ENCODE measurements at regions of chr1 and their contacts with region 1.

Region 1: DNA sequence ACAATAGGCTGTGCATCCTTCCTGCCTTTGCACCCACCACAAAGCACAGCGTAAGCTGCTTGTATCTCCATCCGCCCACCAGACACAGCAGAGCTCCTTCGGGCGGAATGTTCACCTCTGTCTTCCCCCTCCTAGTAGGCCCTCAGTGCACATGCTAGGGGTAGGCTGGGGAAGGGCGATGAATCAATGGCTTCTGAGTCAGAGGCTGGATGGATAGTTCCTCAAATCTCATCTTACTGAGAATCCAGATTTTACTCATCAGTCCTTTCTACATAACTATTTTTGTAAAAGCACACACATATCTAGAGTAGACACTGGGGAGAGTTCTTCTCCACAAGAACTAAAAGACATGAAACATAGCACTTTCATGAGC is 73.8 kb downstream of the BCAR3 start:
- DNase-seq: no peak
- H3K4me3 Mint-ChIP-seq: no peak overlapping the region
- H3K27ac Mint-ChIP-seq: peak overlapping the region; percentile 31
- H3K4me1 Mint-ChIP-seq: peaks cover 43% of the 10 kb centered on the region
- H3K27me3 Mint-ChIP-seq: peaks cover 35% of the 10 kb centered on the region

Region 2: GRCh38 chr1:93459126-93459525 is 148.7 kb before region 1 on chr1:
- intact Hi-C with region 1: loop called (anchors 5 kb)
- DNase-seq: no peak
- H3K4me3 Mint-ChIP-seq: no peak overlapping the region
- H3K27ac Mint-ChIP-seq: no peak overlapping the region
- H3K4me1 Mint-ChIP-seq: peaks cover 2% of the 10 kb centered on the region
- H3K27me3 Mint-ChIP-seq: peaks cover 36% of the 10 kb centered on the region

Region 3: GRCh38 chr1:93567255-93567918 is 40.4 kb before region 1 on chr1:
- intact Hi-C with region 1: loop called (anchors 5 kb)
- DNase-seq: no peak
- H3K4me3 Mint-ChIP-seq: no peak overlapping the region
- H3K27ac Mint-ChIP-seq: no peak overlapping the region
- H3K4me1 Mint-ChIP-seq: no peaks in the 10 kb centered on the region
- H3K27me3 Mint-ChIP-seq: no peaks in the 10 kb centered on the region

Region 4: GRCh38 chr1:93715529-93716126 is 107.8 kb after region 1 on chr1:
- intact Hi-C with region 1: loop called (anchors 1 kb)
- DNase-seq: peak; percentile 48
- H3K4me3 Mint-ChIP-seq: peak overlapping the region; percentile 47
- H3K27ac Mint-ChIP-seq: peak overlapping the region; percentile 78
- H3K4me1 Mint-ChIP-seq: peaks cover 61% of the 10 kb centered on the region
- H3K27me3 Mint-ChIP-seq: no peaks in the 10 kb centered on the region

Region 5: DNA sequence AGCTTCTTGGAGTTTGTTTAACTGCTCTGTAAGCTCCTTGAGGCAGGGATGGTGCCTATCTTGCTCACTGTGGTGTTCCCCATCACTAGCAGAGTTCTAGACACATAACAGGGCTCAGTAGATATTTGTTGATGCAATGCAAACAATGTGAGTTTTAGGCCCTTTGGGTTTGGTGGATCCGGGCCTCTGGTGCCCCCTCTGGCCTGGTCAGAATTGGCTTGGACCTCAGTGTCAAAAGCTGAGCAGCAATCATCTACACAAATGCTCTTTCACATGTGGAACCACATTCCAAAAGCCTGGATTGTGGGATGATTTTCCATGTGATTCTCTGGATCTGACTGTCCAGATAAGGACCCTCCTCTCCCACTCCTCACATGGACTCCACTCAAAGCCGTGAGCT is 127.2 kb after region 1 on chr1:
- intact Hi-C with region 1: no loop called
- DNase-seq: no peak
- H3K4me3 Mint-ChIP-seq: no peak overlapping the region
- H3K27ac Mint-ChIP-seq: no peak overlapping the region
- H3K4me1 Mint-ChIP-seq: peaks cover 2% of the 10 kb centered on the region
- H3K27me3 Mint-ChIP-seq: peaks cover 3% of the 10 kb centered on the region

Region 6: GRCh38 chr1:94218332-94218731 is 610.5 kb after region 1 on chr1:
- intact Hi-C with region 1: no loop called
- DNase-seq: no peak
- H3K4me3 Mint-ChIP-seq: no peak overlapping the region
- H3K27ac Mint-ChIP-seq: no peak overlapping the region
- H3K4me1 Mint-ChIP-seq: no peaks in the 10 kb centered on the region
- H3K27me3 Mint-ChIP-seq: peaks cover 36% of the 10 kb centered on the region